ENCODE measurements at regions of chr11 and their contacts with region 1.

Region 1: GRCh38 chr11:34653826-34654490 is 33.1 kb downstream of the EHF start:
- DNase-seq: peak; percentile 93
- ATAC-seq: peak; percentile 92
- H3K4me3 ChIP-seq: peak overlapping the region in 1 of 2 experiments; percentile 12; a peak in 1 of 4 replicates
- H3K27ac ChIP-seq: peak overlapping the region; percentile 50
- H3K4me1 ChIP-seq: peaks cover 35 to 75% of the 10 kb centered on the region in 2 experiments
- H3K27me3 ChIP-seq: no peaks in the 10 kb centered on the region
- CTCF ChIP-seq: peak in 1 of 3 experiments; percentile 8; a peak in 2 of 6 replicates
- POLR2A ChIP-seq: no peak
- RAD21 ChIP-seq: peak; percentile 75

Region 2: GRCh38 chr11:34344768-34345539 is 309.0 kb before region 1 on chr11:
- CTCF ChIA-PET with region 1: no interaction called
- POLR2A ChIA-PET with region 1: no interaction called
- RAD21 ChIA-PET with region 1: no interaction called
- intact Hi-C with region 1: no loop called
- DNase-seq: peak; percentile 52
- ATAC-seq: peak; percentile 60
- H3K4me3 ChIP-seq: 0 out of 4 replicates have a peak overlapping the region, but pooled peaks of 1 of the 2 experiments have one; percentile 2
- H3K27ac ChIP-seq: peak overlapping the region; percentile 41
- H3K4me1 ChIP-seq: peaks cover 47 to 56% of the 10 kb centered on the region in 2 experiments
- H3K27me3 ChIP-seq: no peaks in the 10 kb centered on the region
- CTCF ChIP-seq: no peak
- POLR2A ChIP-seq: no peak
- RAD21 ChIP-seq: no peak

Region 3: GRCh38 chr11:34358728-34359547 is 295.0 kb before region 1 on chr11:
- CTCF ChIA-PET with region 1: no interaction called
- POLR2A ChIA-PET with region 1: no interaction called
- RAD21 ChIA-PET with region 1: no interaction called
- intact Hi-C with region 1: no loop called
- DNase-seq: peak; percentile 68
- ATAC-seq: peak; percentile 56
- H3K4me3 ChIP-seq: peak overlapping the region; percentile 56 to 63
- H3K27ac ChIP-seq: peak overlapping the region; percentile 62
- H3K4me1 ChIP-seq: peaks cover 3 to 30% of the 10 kb centered on the region in 2 experiments; a peak in 3 of 4 replicates
- H3K27me3 ChIP-seq: no peaks in the 10 kb centered on the region
- CTCF ChIP-seq: peak; percentile 68 to 99 (median 97)
- POLR2A ChIP-seq: peak; percentile 24
- RAD21 ChIP-seq: peak; percentile 96

Region 4: DNA sequence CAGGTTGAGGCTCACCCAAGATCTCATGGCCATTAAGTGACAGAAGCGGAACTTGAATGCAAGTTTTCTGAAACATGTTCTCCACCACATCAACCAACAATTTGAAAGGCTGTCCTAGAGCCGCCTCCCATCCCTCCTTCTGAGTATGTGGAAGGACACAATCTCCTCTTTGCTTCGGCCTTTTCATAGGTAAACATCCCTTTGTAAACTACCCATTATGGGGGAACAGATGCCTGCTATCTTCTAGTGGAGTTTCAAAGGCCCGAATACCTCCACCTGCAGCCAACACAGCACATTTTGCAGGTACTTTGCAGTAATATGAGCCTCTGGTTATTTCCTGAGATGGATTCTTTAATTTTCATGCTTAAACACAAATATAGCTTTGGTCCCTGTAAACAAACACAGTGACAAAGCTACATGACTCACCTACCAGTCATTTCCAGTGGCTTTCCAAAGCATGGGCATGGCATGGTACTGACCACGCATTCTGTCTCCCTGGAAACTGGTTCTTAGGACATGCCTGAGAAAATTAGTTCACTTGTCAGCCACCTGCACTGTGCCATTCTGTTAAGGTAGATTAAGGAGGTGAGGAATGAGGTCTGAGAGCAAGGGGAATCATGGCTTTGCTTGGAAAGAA is 27.1 kb after region 1 on chr11:
- CTCF ChIA-PET with region 1: no interaction called
- POLR2A ChIA-PET with region 1: interaction called, 12 read pairs
- RAD21 ChIA-PET with region 1: interaction called in 1 of 2 experiments, 5 read pairs
- intact Hi-C with region 1: loop called (anchors 2 kb)
- DNase-seq: peak; percentile 86
- ATAC-seq: peak; percentile 67
- H3K4me3 ChIP-seq: peak overlapping the region in 1 of 2 experiments; percentile 2; a peak in 2 of 4 replicates
- H3K27ac ChIP-seq: peak overlapping the region; percentile 27; the same call in 1 of the 2 replicates
- H3K4me1 ChIP-seq: peaks cover 42 to 81% of the 10 kb centered on the region in 2 experiments
- H3K27me3 ChIP-seq: no peaks in the 10 kb centered on the region
- CTCF ChIP-seq: no peak
- POLR2A ChIP-seq: no peak
- RAD21 ChIP-seq: peak; percentile 22; the same call in 1 of the 2 replicates